HEK293 (cell line): ENCODE measurements at regions of chr17 and their contacts with region 1.

Region 1: GRCh38 chr17:42067351-42068091 is 17.1 kb upstream of the C17orf113 start:
- H3K4me3 ChIP-seq: no peak overlapping the region
- H3K27ac ChIP-seq: no peak overlapping the region
- H3K4me1 ChIP-seq: no peaks in the 10 kb centered on the region
- CTCF ChIP-seq: peak; percentile 99

Region 2: GRCh38 chr17:42034059-42034458 is 33.5 kb before region 1 on chr17:
- CTCF ChIA-PET with region 1: interaction called, 12 read pairs
- POLR2A ChIA-PET with region 1: no interaction called
- H3K4me3 ChIP-seq: no peak overlapping the region
- H3K27ac ChIP-seq: no peak overlapping the region
- H3K4me1 ChIP-seq: no peaks in the 10 kb centered on the region
- CTCF ChIP-seq: no peak

Region 3: DNA sequence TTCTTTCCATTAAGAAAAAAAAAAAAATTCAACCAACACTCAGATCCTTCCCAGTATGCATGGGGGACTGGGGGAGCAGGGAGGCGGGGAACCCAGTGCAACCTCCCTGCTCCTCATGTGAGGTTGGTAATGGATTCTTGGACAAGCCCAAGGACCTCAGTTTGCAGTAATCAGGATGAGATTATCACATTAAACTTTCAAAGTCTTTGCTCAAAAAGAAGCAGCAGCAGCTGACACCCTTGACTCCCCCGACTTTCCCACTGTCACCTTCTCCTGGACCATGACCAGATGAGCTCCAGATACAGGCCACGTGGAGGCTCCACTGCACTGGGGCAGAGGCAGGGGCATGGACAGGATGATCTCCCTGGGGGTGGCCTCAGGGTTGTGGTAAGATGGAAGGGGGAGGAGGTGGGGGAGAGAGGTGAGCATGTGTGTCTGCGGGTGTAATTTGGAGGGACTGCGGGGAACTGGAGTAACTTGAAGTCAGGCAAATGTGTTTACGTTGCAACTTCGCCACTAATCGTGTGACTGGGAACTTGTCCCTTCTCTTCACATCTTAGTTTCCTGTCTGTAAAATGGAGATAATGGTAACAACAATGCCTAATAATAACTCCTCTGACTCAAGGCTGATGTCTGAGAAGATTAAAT is 11.0 kb after region 1 on chr17:
- CTCF ChIA-PET with region 1: interaction called, 29 read pairs
- POLR2A ChIA-PET with region 1: interaction called, 3 read pairs
- H3K4me3 ChIP-seq: no peak overlapping the region
- H3K27ac ChIP-seq: no peak overlapping the region
- H3K4me1 ChIP-seq: no peaks in the 10 kb centered on the region
- CTCF ChIP-seq: no peak

Region 4: DNA sequence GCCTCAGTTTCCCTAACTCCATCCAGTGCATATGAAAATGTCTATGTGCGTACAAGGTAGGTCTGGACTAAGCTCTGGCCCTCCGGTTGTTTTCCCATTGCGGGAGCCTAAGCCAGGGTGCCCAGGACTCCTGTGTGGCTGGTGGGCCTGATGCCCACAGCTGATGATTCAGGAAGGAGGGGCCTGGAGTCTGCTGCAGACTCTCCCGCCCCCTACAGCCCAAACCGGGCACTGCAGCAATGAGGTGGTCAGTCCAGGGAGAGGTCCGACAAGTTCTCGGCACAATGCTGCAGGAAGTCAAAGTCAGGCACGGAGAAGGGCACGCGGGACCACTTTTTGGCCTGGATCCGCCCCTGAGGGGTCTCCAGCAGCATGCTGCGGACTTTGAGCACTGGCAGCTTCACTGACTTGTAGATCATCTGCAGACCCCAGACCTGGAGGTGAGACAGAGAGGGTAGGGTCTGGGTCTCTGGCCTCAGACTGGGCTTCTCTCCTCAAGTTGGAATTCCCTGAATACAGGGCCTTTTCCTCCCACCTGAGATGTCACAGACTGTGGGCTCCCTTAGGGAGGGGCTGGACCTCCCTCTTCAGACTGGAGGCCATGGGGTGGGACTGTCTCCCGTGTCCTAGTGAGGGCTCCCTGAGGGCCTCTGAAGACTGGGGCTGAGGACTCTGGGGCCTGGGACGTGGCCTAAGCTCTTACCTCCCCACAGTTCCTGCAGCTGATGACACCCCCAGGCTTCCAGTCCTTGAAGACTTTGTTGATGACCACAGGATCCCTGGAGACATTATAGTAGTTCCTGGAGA is 34.2 kb after region 1 on chr17:
- CTCF ChIA-PET with region 1: interaction called, 132 read pairs
- POLR2A ChIA-PET with region 1: interaction called, 5 read pairs
- H3K4me3 ChIP-seq: no peak overlapping the region
- H3K27ac ChIP-seq: no peak overlapping the region
- H3K4me1 ChIP-seq: no peaks in the 10 kb centered on the region; the same call in 1 of the 2 replicates
- CTCF ChIP-seq: peak; percentile 69

Region 5: DNA sequence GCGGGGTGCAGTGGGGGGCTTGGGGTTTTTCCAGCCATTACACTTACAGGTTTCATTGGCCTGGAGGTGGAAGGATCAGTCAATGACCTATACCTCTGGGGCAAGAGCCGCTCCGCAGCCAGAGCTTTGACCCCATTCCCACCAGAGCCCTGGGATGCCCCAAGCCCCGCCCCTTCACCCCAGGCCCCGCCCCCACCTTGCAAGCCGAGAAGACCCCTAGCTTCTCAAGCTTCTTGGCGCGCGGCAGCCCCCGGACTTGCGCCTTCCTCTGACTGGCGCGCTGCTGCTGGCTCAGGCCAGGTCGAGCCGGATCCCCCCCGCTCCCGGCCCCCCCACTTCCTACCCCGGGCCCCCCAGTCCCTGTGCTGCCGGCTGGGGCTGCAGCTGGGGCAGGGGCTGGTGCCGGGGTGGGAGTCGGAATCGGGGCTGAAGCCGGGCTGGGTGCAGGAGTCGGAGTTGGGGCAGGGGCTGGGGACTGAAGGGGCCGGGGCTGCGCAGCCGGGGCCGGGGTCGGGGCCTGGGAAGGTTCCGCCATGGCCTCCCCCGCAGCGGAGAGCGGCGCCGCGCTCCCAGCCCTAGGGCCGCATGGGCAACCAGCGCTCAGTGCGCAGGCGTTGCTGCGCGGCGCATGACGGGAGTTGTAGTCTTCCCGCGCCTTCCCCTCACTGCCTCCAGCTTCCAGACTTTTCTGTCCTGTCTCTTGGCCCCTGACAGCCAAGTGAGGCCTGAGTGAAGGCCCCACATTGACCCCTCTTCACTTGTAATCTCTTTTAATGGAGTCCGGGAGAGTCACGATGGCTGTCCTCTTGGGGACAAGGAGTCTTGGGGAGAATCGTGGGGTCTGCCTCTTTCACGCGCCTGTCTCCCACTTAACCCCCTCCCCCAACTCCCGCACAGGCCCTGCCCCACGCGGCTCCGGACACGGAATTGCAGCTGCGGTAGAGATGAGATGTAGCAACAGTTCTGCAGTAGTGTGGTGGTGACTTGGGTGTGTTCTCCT is 53.5 kb after region 1 on chr17 and contains the start of gene KAT2A:
- CTCF ChIA-PET with region 1: interaction called, 60 read pairs
- POLR2A ChIA-PET with region 1: no interaction called
- H3K4me3 ChIP-seq: peak within 1 kb of the TSS; percentile 56
- H3K27ac ChIP-seq: peak within 1 kb of the TSS; percentile 18; the same call in 1 of the 2 replicates
- H3K4me1 ChIP-seq: peaks cover 4% of the 10 kb centered on the region; the same call in 1 of the 2 replicates
- CTCF ChIP-seq: no peak